ENCODE measurements at regions of chr2 and their contacts with region 1.

Region 1: DNA sequence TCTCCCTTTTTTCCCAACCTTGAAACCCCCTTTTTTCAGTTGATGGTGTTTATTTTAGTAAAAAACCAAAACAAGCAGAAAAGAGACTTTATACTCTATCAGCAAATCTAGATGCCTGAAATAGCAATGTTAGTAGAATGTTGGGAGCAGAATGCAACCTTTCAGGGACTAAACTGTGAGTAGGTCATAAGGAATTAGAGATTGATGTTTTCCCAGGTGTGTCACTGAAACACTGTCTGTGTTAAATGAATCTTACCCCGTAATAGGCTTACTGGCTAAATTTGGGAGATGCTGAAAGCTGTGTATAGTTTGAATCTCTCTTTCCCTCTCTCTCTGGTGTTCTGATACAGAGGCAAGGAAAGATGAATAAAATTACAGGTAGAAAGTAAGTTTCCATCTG is 43.8 kb downstream of the AGFG1 start:
- DNase-seq: no peak
- ATAC-seq: no peak
- H3K4me3 ChIP-seq: no peak overlapping the region
- H3K27ac ChIP-seq: no peak overlapping the region
- H3K4me1 ChIP-seq: peaks cover 16% of the 10 kb centered on the region
- H3K27me3 ChIP-seq: no peaks in the 10 kb centered on the region

Region 2: DNA sequence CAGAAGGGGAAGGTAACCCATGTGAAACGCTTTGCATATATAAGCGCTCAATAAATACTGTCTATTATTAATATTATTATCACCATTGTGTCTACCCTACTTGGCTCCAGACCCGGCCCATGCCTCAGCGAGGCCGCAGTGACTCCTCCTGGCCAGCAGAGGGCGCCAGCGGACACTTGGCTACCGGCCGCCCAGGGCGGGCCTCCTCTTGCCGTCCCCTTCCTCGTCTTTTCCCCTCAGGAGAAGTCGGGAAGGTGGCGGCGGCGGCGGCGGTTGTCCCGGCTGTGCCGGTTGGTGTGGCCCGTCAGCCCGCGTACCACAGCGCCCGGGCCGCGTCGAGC is 43.8 kb before region 1 on chr2 and contains the start of gene AGFG1:
- intact Hi-C with region 1: no loop called
- DNase-seq: peak; percentile 84 to 94 (median 93)
- ATAC-seq: peak; percentile 89 to 90
- H3K4me3 ChIP-seq: peak within 1 kb of the TSS; percentile 99
- H3K27ac ChIP-seq: peak within 1 kb of the TSS; percentile 87
- H3K4me1 ChIP-seq: peaks cover 2% of the 10 kb centered on the region
- H3K27me3 ChIP-seq: no peaks in the 10 kb centered on the region
- total RNA-seq, gene AGFG1: 41.2 to 65.3 (median 50.4) TPM

Region 3: DNA sequence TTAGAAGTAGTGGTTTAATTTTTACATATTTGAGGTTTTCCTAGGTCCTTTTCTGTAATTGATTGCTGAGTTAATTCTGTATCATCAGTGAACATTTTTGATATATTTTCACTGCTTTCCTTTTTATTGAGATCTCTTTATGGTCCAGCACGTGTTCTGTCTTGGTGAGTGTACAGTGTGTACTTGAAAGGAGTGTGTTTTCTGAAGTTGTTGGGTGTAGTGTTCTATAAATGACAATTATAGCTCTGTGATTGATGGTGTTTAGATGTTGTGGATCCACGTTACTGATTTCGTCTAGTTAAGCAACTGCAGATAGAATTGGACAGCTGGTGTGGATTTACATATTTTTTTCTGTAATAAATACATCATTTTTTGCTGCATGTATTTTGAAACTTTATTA is 11.0 kb before region 1 on chr2:
- intact Hi-C with region 1: loop called in 1 of 4 experiments (anchors 1 kb)
- DNase-seq: no peak
- ATAC-seq: no peak
- H3K4me3 ChIP-seq: no peak overlapping the region
- H3K27ac ChIP-seq: no peak overlapping the region
- H3K4me1 ChIP-seq: peaks cover 15% of the 10 kb centered on the region
- H3K27me3 ChIP-seq: no peaks in the 10 kb centered on the region

Region 4: DNA sequence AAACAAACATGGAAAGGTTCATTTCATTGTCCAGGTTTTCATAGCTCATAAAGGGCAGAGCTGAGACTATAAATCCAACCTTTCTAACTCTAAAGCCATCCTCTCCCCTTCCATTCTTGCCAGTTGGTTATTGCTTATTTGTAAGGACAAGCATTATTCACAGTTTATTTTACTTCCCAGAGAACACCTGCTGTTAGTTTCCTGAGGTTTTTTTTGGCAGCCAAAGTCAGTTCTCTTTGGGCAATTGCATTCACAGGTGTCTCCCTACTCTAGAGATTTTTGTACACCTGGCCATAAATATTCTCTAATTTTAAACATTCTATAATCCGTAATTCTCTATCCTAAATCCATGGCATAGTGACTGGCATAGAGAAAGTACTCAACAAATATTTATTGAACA is 753.0 kb after region 1 on chr2:
- intact Hi-C with region 1: no loop called
- DNase-seq: no peak
- ATAC-seq: no peak
- H3K4me3 ChIP-seq: no peak overlapping the region
- H3K27ac ChIP-seq: no peak overlapping the region
- H3K4me1 ChIP-seq: no peaks in the 10 kb centered on the region
- H3K27me3 ChIP-seq: no peaks in the 10 kb centered on the region